ENCODE measurements at regions of chr7 and their contacts with region 1.

Region 1: GRCh38 chr7:64099656-64100531 is 54.7 kb downstream of the ZNF727 start:
- DNase-seq: peak; percentile 62

Region 2: GRCh38 chr7:63927261-63927660 is 172.6 kb before region 1 on chr7:
- intact Hi-C with region 1: no loop called
- DNase-seq: no peak

Region 3: GRCh38 chr7:64206903-64207302 is 107.0 kb after region 1 on chr7 and contains the start of gene ZNF735:
- intact Hi-C with region 1: loop called in 1 of 2 experiments (anchors 2 kb)
- DNase-seq: no peak
- total RNA-seq, gene ZNF735: not detected